ENCODE measurements at regions of chr19 and their contacts with region 1.

Region 1: DNA sequence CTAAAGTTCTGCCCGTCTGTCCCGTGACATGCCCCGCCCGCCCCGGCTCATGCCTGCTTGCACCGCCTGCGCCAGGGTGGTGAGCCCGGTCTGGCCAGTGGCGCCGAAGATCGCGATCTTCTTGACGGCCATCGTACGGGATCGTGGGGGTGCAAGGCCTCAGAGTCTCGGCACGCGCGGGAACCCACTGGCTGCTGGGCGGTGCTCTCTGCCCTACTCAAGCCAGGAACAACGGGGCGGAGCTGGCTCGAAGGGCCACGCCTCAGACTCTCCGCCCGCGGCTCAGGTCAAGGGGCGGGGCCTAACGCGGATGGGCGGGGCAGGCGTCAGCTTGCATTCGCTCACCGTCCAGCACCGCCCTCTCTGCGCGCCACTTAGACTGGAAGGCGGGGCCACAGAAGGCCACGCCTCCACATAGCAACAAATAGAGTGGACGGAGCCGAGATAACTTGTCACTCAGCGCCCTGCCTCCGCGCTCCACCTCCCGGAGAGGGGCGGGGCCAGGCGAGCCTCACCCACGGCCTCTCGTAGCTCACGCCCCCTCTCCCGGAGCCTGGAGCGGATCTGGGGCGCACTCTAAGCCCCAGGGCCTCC is at the start of gene BLVRB:
- DNase-seq: peak; percentile 98 to 100
- ATAC-seq: peak; percentile 73 to 88
- H3K4me3 ChIP-seq: peak within 1 kb of the TSS; percentile 62
- H3K27ac ChIP-seq: peak within 1 kb of the TSS; percentile 86 to 89
- H3K4me1 ChIP-seq: peaks cover 38% of the 10 kb centered on the region
- CTCF ChIP-seq: no peak
- EP300 ChIP-seq: no peak
- POLR2A ChIP-seq: peak; percentile 95
- RAD21 ChIP-seq: no peak
- polyA plus RNA-seq, gene BLVRB: 202 and 241 TPM in 2 replicates

Region 2: DNA sequence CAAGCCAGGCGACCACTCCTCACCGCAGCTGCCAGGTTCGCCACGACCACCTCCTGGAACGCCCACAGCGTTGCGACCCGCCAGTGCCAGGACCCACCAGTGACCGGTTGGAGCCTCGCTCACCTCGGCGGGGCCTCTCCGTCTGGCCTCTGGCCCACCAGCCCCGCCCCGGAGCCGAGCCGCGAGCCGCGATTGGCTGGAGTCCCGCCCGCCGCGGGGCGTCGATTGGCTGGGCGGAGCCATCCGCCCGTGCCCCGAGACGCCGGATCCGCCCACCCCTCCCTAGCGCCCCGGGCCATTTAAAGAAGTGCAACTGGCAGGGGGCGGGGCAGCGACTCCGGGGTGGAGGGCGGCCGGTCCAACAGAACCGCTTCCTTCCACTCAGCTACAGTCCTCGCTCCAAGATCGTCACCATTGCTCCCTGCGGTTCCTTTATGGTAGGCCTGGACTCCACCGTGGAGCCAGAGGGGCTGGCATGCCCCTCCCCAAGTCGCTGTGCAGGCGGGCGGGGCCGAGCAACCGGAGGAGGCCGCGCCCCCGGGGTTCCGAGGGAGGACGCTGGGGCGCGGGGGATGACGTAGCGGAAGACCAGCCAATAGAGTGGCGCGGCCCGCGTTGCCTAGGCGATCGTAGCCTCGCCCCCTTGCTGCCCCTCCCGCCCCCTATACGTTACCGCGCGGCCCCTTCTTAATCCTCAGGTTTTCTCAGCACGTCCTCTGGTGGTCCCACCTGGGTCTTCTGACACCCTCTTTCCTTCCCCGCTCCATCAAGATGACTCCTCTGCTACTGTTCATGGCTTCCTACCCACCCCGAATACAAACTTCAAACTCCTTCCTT is 21.2 kb before region 1 on chr19 and contains the start of gene SERTAD3:
- CTCF ChIA-PET with region 1: interaction called, 74 read pairs
- POLR2A ChIA-PET with region 1: interaction called, 52 read pairs
- DNase-seq: peak; percentile 99 to 100
- ATAC-seq: peak; percentile 74 to 84
- H3K4me3 ChIP-seq: peak within 1 kb of the TSS; percentile 80
- H3K27ac ChIP-seq: peak within 1 kb of the TSS; percentile 88 to 97
- H3K4me1 ChIP-seq: peaks cover 23% of the 10 kb centered on the region
- CTCF ChIP-seq: peak; percentile 58
- EP300 ChIP-seq: no peak
- POLR2A ChIP-seq: peak; percentile 97
- RAD21 ChIP-seq: peak; percentile 70 to 74
- polyA plus RNA-seq, gene SERTAD3: 40.2 and 41.7 TPM in 2 replicates

Region 3: DNA sequence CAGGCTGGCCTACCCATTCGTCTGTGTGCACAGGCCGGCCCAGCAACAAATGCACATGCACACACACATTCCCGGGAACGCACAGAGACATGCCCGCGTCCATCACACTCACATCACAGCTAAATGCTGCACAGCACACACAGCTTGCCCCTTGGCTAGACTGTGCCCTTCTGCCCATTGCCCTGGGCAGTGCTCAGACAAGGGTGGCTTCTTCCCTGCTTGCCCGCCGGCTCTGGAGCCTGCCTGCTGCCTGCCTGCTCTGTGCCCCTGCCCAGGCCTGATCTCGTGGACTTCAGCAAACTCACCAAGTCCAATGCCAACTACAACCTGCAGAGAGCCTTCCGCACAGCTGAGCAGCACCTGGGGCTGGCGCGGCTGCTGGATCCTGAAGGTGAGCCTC is 31.6 kb after region 1 on chr19:
- CTCF ChIA-PET with region 1: interaction called, 22 read pairs
- POLR2A ChIA-PET with region 1: interaction called, 4 read pairs
- DNase-seq: no peak
- ATAC-seq: no peak; a peak in 1 of 6 replicates
- H3K4me3 ChIP-seq: no peak overlapping the region
- H3K27ac ChIP-seq: no peak overlapping the region
- H3K4me1 ChIP-seq: no peaks in the 10 kb centered on the region
- CTCF ChIP-seq: no peak
- EP300 ChIP-seq: no peak
- POLR2A ChIP-seq: no peak
- RAD21 ChIP-seq: no peak

Region 4: DNA sequence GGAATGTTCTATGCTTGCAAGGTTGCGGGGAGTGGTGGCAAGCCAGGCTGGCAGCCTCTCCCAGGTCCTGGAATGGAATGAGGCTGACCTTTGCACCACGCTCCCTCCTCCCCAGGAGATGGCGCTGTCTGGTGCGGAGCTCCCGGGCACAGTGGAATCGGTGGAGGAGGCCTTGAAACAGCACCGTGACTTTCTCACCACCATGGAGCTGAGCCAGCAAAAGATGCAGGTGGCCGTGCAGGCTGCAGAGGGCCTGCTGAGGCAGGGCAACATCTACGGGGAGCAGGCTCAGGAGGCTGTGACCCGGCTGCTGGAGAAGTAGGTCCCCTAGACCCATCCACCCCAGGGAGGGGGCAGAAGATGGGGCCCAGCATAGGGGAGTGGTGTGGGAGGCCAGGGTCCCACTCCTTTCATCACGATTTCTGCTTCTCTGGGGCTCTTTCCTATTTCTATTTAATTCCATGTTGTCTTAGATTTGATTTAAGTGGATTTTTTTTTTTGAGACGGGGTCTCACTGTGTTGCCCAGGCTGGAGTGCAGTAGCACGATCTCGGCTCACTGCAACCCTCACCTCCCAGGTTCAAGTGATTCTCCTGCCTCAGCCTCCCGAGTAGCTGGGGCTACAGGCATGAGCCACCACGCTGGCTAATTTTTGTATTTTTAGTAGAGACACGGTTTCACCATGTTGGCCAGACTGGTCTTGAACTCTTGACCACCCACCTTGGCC is 57.8 kb after region 1 on chr19:
- CTCF ChIA-PET with region 1: interaction called, 85 read pairs
- POLR2A ChIA-PET with region 1: interaction called, 10 read pairs
- DNase-seq: peak; percentile 93 to 96
- ATAC-seq: peak; percentile 80 to 90
- H3K4me3 ChIP-seq: peak overlapping the region; percentile 9; the same call in 2 of the 3 replicates
- H3K27ac ChIP-seq: peak overlapping the region; percentile 57 to 73
- H3K4me1 ChIP-seq: peaks cover 21% of the 10 kb centered on the region
- CTCF ChIP-seq: peak; percentile 92
- EP300 ChIP-seq: no peak
- POLR2A ChIP-seq: no peak
- RAD21 ChIP-seq: peak; percentile 62 to 73

Region 5: GRCh38 chr19:40549007-40549708 is 83.5 kb after region 1 on chr19:
- CTCF ChIA-PET with region 1: interaction called, 19 read pairs
- POLR2A ChIA-PET with region 1: no interaction called
- DNase-seq: peak; percentile 92
- ATAC-seq: peak; percentile 97 to 99
- H3K4me3 ChIP-seq: peak overlapping the region; percentile 33
- H3K27ac ChIP-seq: peak overlapping the region; percentile 49 to 68; a peak in 4 of 6 replicates
- H3K4me1 ChIP-seq: peaks cover 5% of the 10 kb centered on the region
- CTCF ChIP-seq: peak; percentile 85
- EP300 ChIP-seq: no peak; a peak in 1 of 5 replicates
- POLR2A ChIP-seq: no peak
- RAD21 ChIP-seq: peak; percentile 63 to 90

Region 6: GRCh38 chr19:40603389-40604135 is 137.9 kb after region 1 on chr19:
- CTCF ChIA-PET with region 1: interaction called, 128 read pairs
- POLR2A ChIA-PET with region 1: interaction called, 35 read pairs
- DNase-seq: peak; percentile 99 to 100
- ATAC-seq: peak; percentile 41 to 80
- H3K4me3 ChIP-seq: peak overlapping the region; percentile 36
- H3K27ac ChIP-seq: peak overlapping the region; percentile 55 to 85
- H3K4me1 ChIP-seq: peaks cover 58% of the 10 kb centered on the region
- CTCF ChIP-seq: peak; percentile 20; the same call in 1 of the 3 replicates
- EP300 ChIP-seq: no peak
- POLR2A ChIP-seq: peak; percentile 20; the same call in 1 of the 2 replicates
- RAD21 ChIP-seq: no peak; a peak in 1 of 5 replicates